ENCODE measurements at regions of chrX and their contacts with region 1.

Region 1: GRCh38 chrX:13756381-13756780 is 21.8 kb downstream of the OFD1 start:
- DNase-seq: no peak
- H3K4me3 ChIP-seq: no peak overlapping the region
- H3K27ac ChIP-seq: no peak overlapping the region
- H3K4me1 ChIP-seq: no peaks in the 10 kb centered on the region
- H3K27me3 ChIP-seq: no peaks in the 10 kb centered on the region
- CTCF ChIP-seq: no peak

Region 2: GRCh38 chrX:12128017-12128416 is 1628.4 kb before region 1 on chrX:
- CTCF ChIA-PET with region 1: no interaction called
- POLR2A ChIA-PET with region 1: interaction called, 10 read pairs
- intact Hi-C with region 1: no loop called
- DNase-seq: no peak
- H3K4me3 ChIP-seq: no peak overlapping the region
- H3K27ac ChIP-seq: no peak overlapping the region
- H3K4me1 ChIP-seq: no peaks in the 10 kb centered on the region
- H3K27me3 ChIP-seq: no peaks in the 10 kb centered on the region
- CTCF ChIP-seq: no peak